ENCODE measurements at regions of chr9 and their contacts with region 1.

Region 1: DNA sequence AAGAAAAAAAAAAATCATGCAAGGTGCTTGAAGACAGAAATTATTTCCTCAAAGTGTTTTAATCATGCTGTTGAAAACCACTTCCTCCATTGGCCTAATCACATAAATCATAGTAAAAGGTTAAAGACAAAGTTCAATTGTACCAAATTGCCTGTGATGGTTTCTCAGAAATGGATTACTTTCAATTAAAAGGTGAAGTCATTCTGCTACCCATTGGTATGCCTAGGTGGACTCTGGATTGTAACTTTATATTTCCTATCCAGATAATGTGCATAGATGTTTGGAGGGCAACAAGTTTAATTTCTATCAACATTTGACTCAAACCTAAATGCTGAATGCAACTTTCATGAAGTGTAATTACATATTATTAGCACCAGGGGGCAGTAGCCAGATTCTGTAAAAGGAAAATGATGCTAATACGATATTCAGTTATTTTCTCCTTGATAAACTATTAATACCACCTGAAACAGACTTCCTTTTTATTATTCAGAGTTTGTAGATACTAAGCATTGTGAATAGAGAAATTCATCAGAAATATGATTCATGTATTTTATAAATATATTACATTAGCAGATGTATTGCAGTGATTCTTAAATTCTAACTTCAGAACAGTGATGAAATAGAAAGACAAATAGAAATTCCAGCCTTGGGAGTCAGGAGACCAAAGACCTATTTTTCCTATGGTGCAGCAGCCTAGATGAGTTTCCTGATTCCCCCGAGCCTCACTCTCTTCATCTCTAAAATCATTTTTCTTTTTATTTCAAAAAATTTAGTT is 148.2 kb downstream of the CAAP1 start:
- DNase-seq: peak; percentile 45
- H3K4me3 ChIP-seq: no peak overlapping the region
- H3K27ac ChIP-seq: no peak overlapping the region
- H3K4me1 ChIP-seq: no peaks in the 10 kb centered on the region
- CTCF ChIP-seq: peak; percentile 93

Region 2: GRCh38 chr9:26975693-26976059 is 231.3 kb after region 1 on chr9:
- CTCF ChIA-PET with region 1: no interaction called
- POLR2A ChIA-PET with region 1: no interaction called
- intact Hi-C with region 1: loop called (anchors 1 kb)
- DNase-seq: peak; percentile 20
- H3K4me3 ChIP-seq: no peak overlapping the region
- H3K27ac ChIP-seq: no peak overlapping the region
- H3K4me1 ChIP-seq: no peaks in the 10 kb centered on the region
- CTCF ChIP-seq: peak; percentile 56

Region 3: GRCh38 chr9:27276193-27277030 is 532.0 kb after region 1 on chr9:
- CTCF ChIA-PET with region 1: no interaction called
- POLR2A ChIA-PET with region 1: no interaction called
- intact Hi-C with region 1: loop called (anchors 2 kb)
- DNase-seq: peak; percentile 65
- H3K4me3 ChIP-seq: no peak overlapping the region
- H3K27ac ChIP-seq: no peak overlapping the region
- H3K4me1 ChIP-seq: no peaks in the 10 kb centered on the region
- CTCF ChIP-seq: peak; percentile 92

Measured in OCI-LY7 (cell line).